ENCODE measurements at regions of chr3 and their contacts with region 1.

Region 1: GRCh38 chr3:133426721-133427120 is 26.9 kb downstream of the BFSP2 start:
- DNase-seq: no peak
- H3K4me3 Mint-ChIP-seq: no peak overlapping the region
- H3K27ac Mint-ChIP-seq: no peak overlapping the region
- H3K4me1 Mint-ChIP-seq: no peaks in the 10 kb centered on the region
- H3K27me3 Mint-ChIP-seq: peaks cover 68% of the 10 kb centered on the region
- CTCF ChIP-seq: no peak

Region 2: GRCh38 chr3:133283958-133284807 is 142.5 kb before region 1 on chr3:
- CTCF ChIA-PET with region 1: no interaction called
- intact Hi-C with region 1: loop called (anchors 5 kb)
- DNase-seq: no peak
- H3K4me3 Mint-ChIP-seq: no peak overlapping the region
- H3K27ac Mint-ChIP-seq: no peak overlapping the region
- H3K4me1 Mint-ChIP-seq: no peaks in the 10 kb centered on the region
- H3K27me3 Mint-ChIP-seq: peaks cover 57% of the 10 kb centered on the region
- CTCF ChIP-seq: no peak

Region 3: DNA sequence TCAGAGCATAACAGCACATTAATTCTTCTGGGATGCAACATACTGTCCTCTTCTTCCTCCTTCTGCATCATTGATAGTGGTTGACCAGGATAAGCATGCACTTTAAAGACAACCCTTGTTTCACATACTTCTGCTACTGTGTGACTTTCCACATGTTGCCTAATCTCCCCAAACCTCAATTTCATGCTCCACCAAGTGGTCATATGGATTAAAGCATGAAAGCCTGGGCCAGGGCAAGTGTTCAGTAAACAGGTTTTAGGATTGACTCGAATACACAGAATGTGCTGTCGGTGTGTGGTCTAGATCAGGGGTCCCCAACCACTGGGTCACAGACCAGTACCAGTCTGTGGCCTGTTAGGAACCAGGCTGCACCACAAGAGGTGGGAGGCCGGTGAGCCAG is 49.3 kb before region 1 on chr3:
- CTCF ChIA-PET with region 1: no interaction called
- intact Hi-C with region 1: no loop called
- DNase-seq: peak; percentile 51
- H3K4me3 Mint-ChIP-seq: no peak overlapping the region
- H3K27ac Mint-ChIP-seq: no peak overlapping the region
- H3K4me1 Mint-ChIP-seq: peaks cover 13% of the 10 kb centered on the region
- H3K27me3 Mint-ChIP-seq: peaks cover 98% of the 10 kb centered on the region
- CTCF ChIP-seq: peak; percentile 56

Region 4: GRCh38 chr3:133487920-133488540 is 61.3 kb after region 1 on chr3:
- CTCF ChIA-PET with region 1: no interaction called
- intact Hi-C with region 1: no loop called
- DNase-seq: peak; percentile 62
- H3K4me3 Mint-ChIP-seq: no peak overlapping the region
- H3K27ac Mint-ChIP-seq: no peak overlapping the region
- H3K4me1 Mint-ChIP-seq: peaks cover 19% of the 10 kb centered on the region
- H3K27me3 Mint-ChIP-seq: no peaks in the 10 kb centered on the region
- CTCF ChIP-seq: peak; percentile 61

Region 5: GRCh38 chr3:133506215-133506901 is 79.6 kb after region 1 on chr3:
- CTCF ChIA-PET with region 1: no interaction called
- intact Hi-C with region 1: no loop called
- DNase-seq: peak; percentile 44
- H3K4me3 Mint-ChIP-seq: peak overlapping the region; percentile 2
- H3K27ac Mint-ChIP-seq: peak overlapping the region; percentile 50
- H3K4me1 Mint-ChIP-seq: peaks cover 13% of the 10 kb centered on the region
- H3K27me3 Mint-ChIP-seq: peaks cover 7% of the 10 kb centered on the region
- CTCF ChIP-seq: no peak

Region 6: DNA sequence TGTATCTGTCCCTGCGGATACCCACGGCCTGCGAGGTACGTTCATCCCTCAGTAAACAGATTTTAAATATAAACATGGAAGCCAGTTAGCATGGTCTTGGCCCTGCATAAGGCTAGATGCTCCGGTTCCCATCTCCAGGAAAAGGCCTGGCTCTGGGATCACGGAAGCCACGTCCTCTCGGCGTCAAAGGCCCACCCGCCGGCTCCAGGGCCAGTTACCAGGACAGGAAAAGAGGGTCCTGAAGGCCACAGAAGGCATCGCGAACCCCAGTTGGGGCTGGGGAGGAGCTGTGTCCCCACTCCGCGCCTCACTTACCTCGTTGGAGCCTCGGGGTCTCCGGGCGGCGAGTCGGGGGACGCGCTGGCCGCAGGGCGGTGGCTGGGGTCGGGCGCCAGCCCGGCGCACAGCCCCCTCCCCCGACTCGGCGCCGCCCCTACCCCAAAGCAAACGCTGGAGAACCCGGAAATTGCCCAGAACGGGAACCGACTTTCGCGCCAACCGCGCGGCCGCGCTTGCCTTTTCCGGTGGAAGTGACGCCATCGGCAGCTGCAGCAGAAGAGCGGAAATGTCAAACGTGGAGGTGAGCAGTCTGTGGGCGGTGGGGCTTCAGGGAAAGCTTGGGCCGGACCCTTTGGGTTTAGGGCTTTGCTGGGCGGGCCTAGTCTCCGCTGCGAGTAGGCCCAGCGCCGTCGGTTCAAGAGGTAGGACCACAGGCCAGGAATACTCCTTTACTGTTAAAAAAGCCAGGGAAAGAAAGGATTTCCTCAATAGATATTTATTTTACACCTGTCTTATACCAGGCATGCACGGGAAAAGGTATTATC is 234.9 kb after region 1 on chr3 and contains the start of gene TOPBP1:
- CTCF ChIA-PET with region 1: no interaction called
- intact Hi-C with region 1: no loop called
- DNase-seq: peak; percentile 91
- H3K4me3 Mint-ChIP-seq: peak within 1 kb of the TSS; percentile 82
- H3K27ac Mint-ChIP-seq: peak within 1 kb of the TSS; percentile 59
- H3K4me1 Mint-ChIP-seq: peaks cover 32% of the 10 kb centered on the region
- H3K27me3 Mint-ChIP-seq: no peaks in the 10 kb centered on the region
- CTCF ChIP-seq: no peak
- total RNA-seq, gene TOPBP1: 86.6 and 94.7 TPM in 2 replicates